ENCODE measurements at regions of chr12 and their contacts with region 1.

Region 1: DNA sequence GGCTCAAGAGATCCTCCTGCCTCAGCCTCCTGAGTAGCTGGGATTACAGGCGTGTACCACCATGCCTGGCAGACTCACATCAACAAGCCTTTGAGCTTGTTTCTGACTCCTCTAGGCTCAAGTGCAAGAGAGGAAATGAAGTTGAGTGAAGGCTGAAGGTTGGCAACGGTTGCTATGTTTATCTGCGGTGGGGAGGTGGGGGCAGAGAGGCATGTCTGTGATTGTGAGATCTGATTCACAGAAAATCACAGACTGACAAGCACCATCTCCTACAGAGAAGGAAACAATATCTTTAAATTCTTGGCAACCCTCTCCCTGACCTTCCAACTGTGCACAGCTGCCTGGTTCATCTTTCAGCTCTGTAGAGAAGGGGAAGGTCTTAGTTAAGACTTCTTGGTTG is 22.1 kb upstream of the NINJ2 start:
- DNase-seq: peak; percentile 88
- ATAC-seq: peak; percentile 84
- H3K4me3 ChIP-seq: peak overlapping the region; percentile 37; the same call in 1 of the 2 replicates
- H3K27ac ChIP-seq: peak overlapping the region; percentile 73
- H3K4me1 ChIP-seq: peaks cover 39% of the 10 kb centered on the region
- H3K27me3 ChIP-seq: no peaks in the 10 kb centered on the region
- CTCF ChIP-seq: no peak
- EP300 ChIP-seq: peak; percentile 44 to 64; a peak in 2 of 4 replicates
- POLR2A ChIP-seq: 0 out of 2 replicates have a peak, but pooled peaks have one; percentile 40
- RAD21 ChIP-seq: no peak

Region 2: GRCh38 chr12:553205-554000 is 132.0 kb before region 1 on chr12:
- CTCF ChIA-PET with region 1: no interaction called
- POLR2A ChIA-PET with region 1: no interaction called
- RAD21 ChIA-PET with region 1: no interaction called
- SMC1A ChIA-PET with region 1: no interaction called
- in situ Hi-C with region 1: no loop called
- intact Hi-C with region 1: no loop called
- DNase-seq: no peak
- ATAC-seq: peak; percentile 25
- H3K4me3 ChIP-seq: peak overlapping the region; percentile 48; the same call in 1 of the 2 replicates
- H3K27ac ChIP-seq: 0 out of 2 replicates have a peak overlapping the region, but pooled peaks have one; percentile 1
- H3K4me1 ChIP-seq: no peaks in the 10 kb centered on the region
- H3K27me3 ChIP-seq: peaks cover 0 to 3% of the 10 kb centered on the region in 2 experiments; a peak in 1 of 4 replicates
- CTCF ChIP-seq: no peak
- EP300 ChIP-seq: no peak
- POLR2A ChIP-seq: peak; percentile 44; the same call in 1 of the 2 replicates
- RAD21 ChIP-seq: no peak

Region 3: DNA sequence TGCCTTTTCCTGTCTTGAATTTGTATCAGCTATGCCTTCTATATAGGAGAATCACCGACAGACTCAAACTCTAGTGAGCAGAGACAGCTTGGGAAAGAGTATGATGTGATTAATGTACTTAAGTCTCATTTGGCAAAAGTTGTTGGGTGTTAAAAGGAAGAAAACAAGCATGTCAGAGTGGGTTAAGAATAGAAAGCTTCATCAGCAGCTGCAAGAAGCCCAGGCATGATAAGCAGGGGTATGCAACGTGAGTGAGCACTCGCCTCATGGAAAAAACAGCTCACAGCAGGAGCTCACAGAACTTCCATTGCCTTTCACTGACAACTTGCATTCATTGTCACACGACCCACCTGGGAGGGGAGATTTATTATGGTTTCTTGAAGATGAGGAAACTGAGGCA is 31.1 kb after region 1 on chr12:
- CTCF ChIA-PET with region 1: no interaction called
- POLR2A ChIA-PET with region 1: interaction called, 11 read pairs
- RAD21 ChIA-PET with region 1: interaction called, 13 read pairs
- SMC1A ChIA-PET with region 1: interaction called, 12 read pairs
- in situ Hi-C with region 1: no loop called
- intact Hi-C with region 1: no loop called
- DNase-seq: no peak
- ATAC-seq: no peak
- H3K4me3 ChIP-seq: no peak overlapping the region
- H3K27ac ChIP-seq: no peak overlapping the region
- H3K4me1 ChIP-seq: peaks cover 24% of the 10 kb centered on the region
- H3K27me3 ChIP-seq: no peaks in the 10 kb centered on the region
- CTCF ChIP-seq: no peak
- EP300 ChIP-seq: no peak
- POLR2A ChIP-seq: no peak
- RAD21 ChIP-seq: no peak

Region 4: DNA sequence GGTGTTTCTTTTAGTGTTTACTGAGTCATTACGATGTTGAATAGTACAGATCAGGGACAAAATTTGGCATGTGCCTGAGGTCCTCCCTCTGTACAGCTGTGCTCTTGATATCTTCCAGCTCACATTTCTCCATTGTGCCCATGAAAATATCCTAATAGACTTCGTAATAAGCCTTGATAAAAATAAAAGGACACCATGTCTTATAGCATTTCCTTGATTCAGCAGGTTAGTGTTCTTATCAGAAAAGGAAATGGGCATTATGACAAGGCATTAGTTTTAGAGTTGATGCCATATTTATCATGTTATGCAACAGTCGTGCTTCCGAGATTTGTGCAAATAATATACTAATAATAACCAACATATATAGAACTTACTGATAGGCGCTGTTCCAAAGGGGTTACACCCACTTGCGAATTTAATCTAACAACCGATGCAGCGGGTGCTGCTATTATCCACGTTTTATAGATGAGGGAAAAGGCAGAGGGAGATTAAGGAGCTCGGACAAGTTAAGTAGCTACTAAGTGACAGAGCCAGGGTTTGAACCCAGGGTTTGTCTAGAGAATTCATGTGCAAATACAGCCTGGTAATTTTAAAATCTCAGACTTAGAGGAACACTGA is 51.8 kb after region 1 on chr12:
- CTCF ChIA-PET with region 1: interaction called, 3 read pairs
- POLR2A ChIA-PET with region 1: interaction called, 8 read pairs
- RAD21 ChIA-PET with region 1: interaction called, 11 read pairs
- SMC1A ChIA-PET with region 1: interaction called, 11 read pairs
- in situ Hi-C with region 1: no loop called
- intact Hi-C with region 1: no loop called
- DNase-seq: no peak
- ATAC-seq: no peak
- H3K4me3 ChIP-seq: no peak overlapping the region
- H3K27ac ChIP-seq: no peak overlapping the region
- H3K4me1 ChIP-seq: no peaks in the 10 kb centered on the region
- H3K27me3 ChIP-seq: no peaks in the 10 kb centered on the region
- CTCF ChIP-seq: no peak
- EP300 ChIP-seq: no peak
- POLR2A ChIP-seq: no peak
- RAD21 ChIP-seq: no peak

Measured in GM12878 (cell line).